Adrenal gland (tissue), 19 donors: ENCODE measurements at regions of chr2 and their contacts with region 1.

Region 1: DNA sequence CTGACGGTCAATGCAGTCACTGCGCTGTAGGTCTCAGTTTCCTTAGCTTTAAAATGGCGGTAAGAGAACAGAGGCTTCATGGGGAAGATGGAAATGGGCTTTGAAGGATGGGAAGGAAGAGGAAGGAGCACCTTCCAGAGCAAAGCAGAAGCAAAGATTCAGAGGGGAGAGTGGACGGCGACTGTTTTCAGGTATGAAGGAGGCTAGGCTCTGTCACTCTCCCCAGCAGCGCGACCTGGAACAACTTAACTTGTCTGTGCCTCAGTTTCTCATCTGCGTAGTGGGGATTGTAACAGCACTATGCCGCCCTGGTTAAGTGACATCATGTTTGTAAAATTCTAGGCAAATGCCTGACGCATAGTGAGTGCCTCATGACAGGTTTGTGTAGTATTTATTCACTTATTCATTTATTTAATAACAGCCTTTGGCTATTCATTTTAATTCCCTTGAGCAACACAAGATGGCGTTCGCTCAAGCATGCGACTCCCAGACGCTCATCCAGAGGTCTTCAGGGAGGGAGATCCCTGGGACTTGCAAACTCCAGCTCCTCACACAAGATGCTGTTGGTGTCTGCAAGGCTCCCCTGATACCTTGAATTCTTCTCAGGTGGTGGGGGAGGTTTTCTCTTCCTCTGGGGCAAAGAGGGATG is 336.3 kb downstream of the DYSF start:
- DNase-seq: peak in 1 of 7 donors; percentile 18
- H3K4me3 ChIP-seq: no peak overlapping the region
- H3K27ac ChIP-seq: no peak overlapping the region
- H3K4me1 ChIP-seq: no peaks in the 10 kb centered on the region
- H3K27me3 ChIP-seq: no peaks in the 10 kb centered on the region
- CTCF ChIP-seq: no peak
- POLR2A ChIP-seq: no peak

Region 2: GRCh38 chr2:71609958-71610357 is 179.7 kb before region 1 on chr2:
- intact Hi-C with region 1: loop called in 1 of 2 experiments (anchors 5 kb)
- DNase-seq: peak in 3 of 7 donors; percentile 6 to 42 (median 7)
- H3K4me3 ChIP-seq: no peak overlapping the region
- H3K27ac ChIP-seq: peak overlapping the region in 1 of 5 donors; percentile 43
- H3K4me1 ChIP-seq: peaks cover 10 to 17% of the 10 kb centered on the region in 2 donors
- H3K27me3 ChIP-seq: no peaks in the 10 kb centered on the region
- CTCF ChIP-seq: peak in 4 of 6 experiments; percentile 26 to 40 (median 34)
- POLR2A ChIP-seq: no peak

Region 3: GRCh38 chr2:71910277-71910676 is 120.6 kb after region 1 on chr2:
- intact Hi-C with region 1: no loop called
- DNase-seq: no peak
- H3K4me3 ChIP-seq: no peak overlapping the region
- H3K27ac ChIP-seq: no peak overlapping the region
- H3K4me1 ChIP-seq: no peaks in the 10 kb centered on the region
- H3K27me3 ChIP-seq: peaks cover 9% of the 10 kb centered on the region
- CTCF ChIP-seq: no peak
- POLR2A ChIP-seq: no peak